ENCODE measurements at regions of chr10 and their contacts with region 1.

Region 1: GRCh38 chr10:44932517-44933450 is 21.6 kb downstream of the TMEM72 start:
- DNase-seq: peak; percentile 98
- ATAC-seq: peak; percentile 88

Region 2: GRCh38 chr10:44878706-44879530 is 53.9 kb before region 1 on chr10:
- intact Hi-C with region 1: no loop called
- DNase-seq: peak; percentile 93
- ATAC-seq: peak; percentile 95

Region 3: DNA sequence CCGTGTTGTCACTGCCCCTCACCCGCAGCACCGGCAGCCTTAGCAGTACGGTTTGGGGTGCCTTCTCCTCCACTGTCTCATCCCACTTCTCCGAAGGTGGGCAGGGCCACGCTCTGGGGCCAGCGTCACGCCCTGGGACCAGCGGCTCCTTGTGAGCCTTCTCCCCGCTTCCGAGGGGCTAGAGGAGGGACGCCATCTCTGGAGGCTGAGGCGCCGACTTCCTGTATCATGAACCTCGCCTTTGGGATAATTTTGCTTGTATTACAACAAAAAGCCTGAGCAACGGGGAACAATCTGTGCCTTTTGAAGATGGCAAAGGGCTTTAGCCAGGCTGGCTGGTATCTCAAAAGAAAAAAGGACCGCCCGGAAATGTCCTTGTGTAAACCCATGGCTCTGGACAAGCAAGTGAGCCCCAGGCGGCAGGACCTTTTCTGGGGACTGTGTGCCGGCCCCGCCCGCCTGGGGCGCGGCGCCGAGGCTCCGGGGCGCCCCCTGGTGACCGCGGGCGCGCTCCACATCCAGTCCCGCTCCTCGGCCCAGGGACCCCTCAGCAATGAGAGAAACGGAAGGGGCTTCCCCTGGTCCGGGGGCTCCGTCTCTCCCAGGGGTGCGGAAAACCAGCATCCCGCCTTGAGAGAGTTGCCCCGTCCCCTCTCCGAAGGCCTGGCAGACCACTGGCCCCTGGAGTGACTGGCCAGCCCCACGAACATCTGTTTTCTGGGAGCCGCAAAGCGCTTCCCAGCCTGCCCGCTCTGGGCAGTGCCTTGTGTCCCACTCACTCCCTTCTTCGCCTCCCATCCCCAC is 42.0 kb after region 1 on chr10:
- intact Hi-C with region 1: loop called (anchors 5 kb)
- DNase-seq: peak; percentile 85
- ATAC-seq: peak; percentile 74

Region 4: GRCh38 chr10:45071043-45071813 is 138.4 kb after region 1 on chr10:
- intact Hi-C with region 1: no loop called
- DNase-seq: no peak
- ATAC-seq: no peak

Measured in left ventricle myocardium superior (tissue), 1 donor.